BJ (cell line): ENCODE measurements at regions of chr16 and their contacts with region 1.

Region 1: GRCh38 chr16:81403616-81404373 is 40.8 kb upstream of the CMIP start:
- DNase-seq: no peak
- H3K4me3 ChIP-seq: peak overlapping the region; percentile 31
- H3K27me3 ChIP-seq: no peaks in the 10 kb centered on the region
- CTCF ChIP-seq: peak; percentile 97

Region 2: DNA sequence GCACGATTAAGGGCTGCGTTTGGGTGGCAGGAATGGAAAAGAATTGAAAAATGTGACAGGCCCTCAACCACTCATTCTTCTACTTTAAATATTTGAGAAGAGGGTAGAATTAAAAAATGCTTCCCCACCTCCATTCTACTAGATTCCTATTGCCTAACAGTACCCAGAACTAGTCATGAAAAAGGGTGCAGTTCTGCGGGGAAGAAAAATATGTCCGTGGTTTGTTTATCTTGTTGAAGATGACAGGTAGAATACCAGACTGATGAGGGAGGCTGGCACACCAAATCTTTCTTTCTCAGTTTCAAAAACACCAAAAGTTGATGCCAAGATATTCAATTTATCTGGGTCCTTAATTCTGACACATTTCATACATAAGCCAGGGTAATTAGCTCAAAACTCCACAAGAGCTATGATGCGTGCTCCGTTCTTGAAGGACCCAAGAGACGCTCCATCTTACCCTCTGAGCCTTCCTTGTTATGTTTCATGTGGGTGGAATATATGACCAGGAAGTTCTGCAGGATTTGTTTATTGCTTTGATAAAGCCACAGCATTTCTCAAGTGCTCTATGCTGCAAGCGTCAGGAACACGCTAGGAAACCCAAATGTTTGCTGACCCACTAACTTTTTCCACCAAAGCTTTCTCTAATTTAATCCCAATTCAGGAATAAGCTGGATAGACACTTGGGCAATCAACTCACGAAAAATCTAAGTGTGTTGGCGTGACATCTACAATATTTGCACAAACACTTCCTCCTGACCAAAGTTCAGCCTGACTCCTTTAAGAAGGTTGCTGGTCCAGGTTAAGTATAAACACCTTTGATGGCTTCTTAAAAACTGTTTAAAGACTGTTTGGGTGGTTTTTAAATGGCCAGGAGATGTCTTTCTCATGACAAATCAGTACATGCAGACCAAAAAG is 109.6 kb before region 1 on chr16:
- CTCF ChIA-PET with region 1: no interaction called
- POLR2A ChIA-PET with region 1: no interaction called
- DNase-seq: no peak
- H3K4me3 ChIP-seq: no peak overlapping the region
- H3K27me3 ChIP-seq: peaks cover 1% of the 10 kb centered on the region; the same call in 1 of the 2 replicates
- CTCF ChIP-seq: no peak

Region 3: GRCh38 chr16:81307760-81308159 is 96.0 kb before region 1 on chr16:
- CTCF ChIA-PET with region 1: no interaction called
- POLR2A ChIA-PET with region 1: no interaction called
- DNase-seq: no peak
- H3K4me3 ChIP-seq: no peak overlapping the region
- H3K27me3 ChIP-seq: no peaks in the 10 kb centered on the region
- CTCF ChIP-seq: no peak

Region 4: DNA sequence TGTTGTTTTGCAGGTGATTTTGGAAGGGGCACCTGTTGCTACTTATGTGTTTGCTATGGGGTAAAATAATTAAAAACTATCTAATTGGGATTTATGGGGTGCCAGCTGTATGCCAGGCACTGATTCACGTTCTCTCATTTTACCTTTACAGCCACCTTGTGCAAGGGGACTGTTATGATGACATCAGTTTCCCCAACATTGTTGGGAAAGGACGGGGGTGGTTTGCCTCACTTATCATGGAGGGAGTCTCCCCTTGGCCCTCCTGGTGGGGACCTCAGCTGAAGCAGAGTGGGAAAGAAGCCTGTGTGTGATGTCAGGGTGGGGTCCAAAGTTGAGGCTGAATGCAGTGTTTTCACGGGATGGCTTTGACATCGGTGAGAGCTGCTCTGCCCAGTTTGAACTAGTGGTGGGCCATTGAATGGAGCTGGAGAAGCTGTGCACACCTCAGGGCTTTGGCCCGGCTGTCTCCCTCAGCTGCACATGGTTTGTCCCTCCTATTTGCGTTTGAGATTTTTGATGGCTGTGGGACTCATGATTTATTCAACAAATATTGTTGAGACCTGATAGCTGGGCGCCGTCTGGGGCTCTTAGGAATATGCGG is 76.9 kb after region 1 on chr16:
- CTCF ChIA-PET with region 1: no interaction called
- POLR2A ChIA-PET with region 1: no interaction called
- DNase-seq: no peak
- H3K4me3 ChIP-seq: no peak overlapping the region
- H3K27me3 ChIP-seq: no peaks in the 10 kb centered on the region
- CTCF ChIP-seq: no peak

Region 5: GRCh38 chr16:81623363-81624102 is 219.7 kb after region 1 on chr16:
- CTCF ChIA-PET with region 1: interaction called, 36 read pairs
- POLR2A ChIA-PET with region 1: no interaction called
- DNase-seq: no peak
- H3K4me3 ChIP-seq: no peak overlapping the region
- H3K27me3 ChIP-seq: no peaks in the 10 kb centered on the region
- CTCF ChIP-seq: peak; percentile 59

Region 6: GRCh38 chr16:81696961-81697615 is 293.3 kb after region 1 on chr16:
- CTCF ChIA-PET with region 1: interaction called, 10 read pairs
- POLR2A ChIA-PET with region 1: no interaction called
- DNase-seq: no peak
- H3K4me3 ChIP-seq: no peak overlapping the region
- H3K27me3 ChIP-seq: no peaks in the 10 kb centered on the region
- CTCF ChIP-seq: peak; percentile 79